Caco-2 (cell line): ENCODE measurements at regions of chr14 and their contacts with region 1.

Region 1: GRCh38 chr14:20343092-20343861 is at the start of gene PARP2:
- DNase-seq: peak; percentile 99 to 100
- H3K4me3 ChIP-seq: peak within 1 kb of the TSS; percentile 78
- H3K4me3 Mint-ChIP-seq: peak within 1 kb of the TSS; percentile 92
- H3K27ac Mint-ChIP-seq: peak within 1 kb of the TSS; percentile 98
- H3K4me1 ChIP-seq: no peaks in the 10 kb centered on the region
- H3K4me1 Mint-ChIP-seq: peaks cover 11% of the 10 kb centered on the region
- H3K27me3 ChIP-seq: no peaks in the 10 kb centered on the region
- H3K27me3 Mint-ChIP-seq: no peaks in the 10 kb centered on the region
- CTCF ChIP-seq: no peak
- total RNA-seq, gene PARP2: 41.1 and 49.4 TPM in 2 replicates

Region 2: DNA sequence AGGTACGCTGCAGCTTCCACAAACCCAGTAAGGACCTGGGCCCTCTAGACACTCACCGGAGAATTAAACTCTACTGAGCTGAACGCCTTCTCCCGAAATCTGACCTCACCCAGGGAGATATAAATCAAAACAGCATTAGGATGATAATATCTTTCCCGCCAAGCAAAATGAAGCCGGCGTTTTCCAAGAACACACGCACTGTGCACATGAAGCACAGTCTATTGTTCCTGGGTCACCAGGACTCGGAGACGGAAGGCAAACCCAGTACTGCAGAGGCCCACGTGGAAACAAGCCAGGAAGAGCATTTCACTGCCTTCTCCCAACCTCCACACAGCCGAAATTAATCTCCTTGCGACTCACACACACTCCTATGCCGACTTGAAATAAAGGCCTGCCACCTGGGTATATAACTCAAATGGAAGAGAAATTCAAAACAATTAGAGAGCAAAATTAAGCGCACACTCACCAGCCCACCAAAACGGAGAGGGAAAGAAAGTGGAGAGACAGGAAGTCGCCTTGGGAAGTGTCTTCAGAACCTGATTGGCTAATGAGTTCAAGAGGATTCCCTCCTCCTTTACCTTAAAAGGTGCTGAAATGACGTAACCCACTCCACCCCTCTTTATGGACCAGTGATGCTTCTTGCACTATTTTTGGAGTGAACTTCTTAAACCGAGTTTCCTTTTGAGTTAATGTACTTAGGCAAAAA is 10.3 kb before region 1 on chr14 and contains the start of gene CCNB1IP1:
- CTCF ChIA-PET with region 1: interaction called, 7 read pairs
- POLR2A ChIA-PET with region 1: interaction called, 52 read pairs
- intact Hi-C with region 1: loop called (anchors 1 kb)
- DNase-seq: peak; percentile 69 to 76
- H3K4me3 ChIP-seq: peak within 1 kb of the TSS; percentile 60
- H3K4me3 Mint-ChIP-seq: peak within 1 kb of the TSS; percentile 96
- H3K27ac Mint-ChIP-seq: peak within 1 kb of the TSS; percentile 96
- H3K4me1 ChIP-seq: peaks cover 10% of the 10 kb centered on the region; the same call in 1 of the 2 replicates
- H3K4me1 Mint-ChIP-seq: peaks cover 22% of the 10 kb centered on the region
- H3K27me3 ChIP-seq: no peaks in the 10 kb centered on the region
- H3K27me3 Mint-ChIP-seq: no peaks in the 10 kb centered on the region
- CTCF ChIP-seq: no peak
- total RNA-seq, gene CCNB1IP1: 111 and 118 TPM in 2 replicates

Region 3: GRCh38 chr14:20454516-20455354 is 111.5 kb after region 1 on chr14 and contains the starts of genes APEX1 and OSGEP:
- CTCF ChIA-PET with region 1: no interaction called
- POLR2A ChIA-PET with region 1: interaction called, 26 read pairs
- intact Hi-C with region 1: loop called (anchors 1 kb)
- DNase-seq: peak; percentile 97 to 99
- H3K4me3 ChIP-seq: peak within 1 kb of the TSS; percentile 63
- H3K4me3 Mint-ChIP-seq: no peak within 1 kb of the TSS
- H3K27ac Mint-ChIP-seq: no peak within 1 kb of the TSS
- H3K4me1 ChIP-seq: no peaks in the 10 kb centered on the region
- H3K4me1 Mint-ChIP-seq: peaks cover 1% of the 10 kb centered on the region
- H3K27me3 ChIP-seq: no peaks in the 10 kb centered on the region
- H3K27me3 Mint-ChIP-seq: no peaks in the 10 kb centered on the region
- CTCF ChIP-seq: no peak
- total RNA-seq, gene APEX1: 176 and 185 TPM in 2 replicates
- total RNA-seq, gene OSGEP: 63.1 and 64.3 TPM in 2 replicates

Region 4: GRCh38 chr14:20469242-20469889 is 126.1 kb after region 1 on chr14 and contains the start of gene PNP:
- CTCF ChIA-PET with region 1: interaction called, 3 read pairs
- POLR2A ChIA-PET with region 1: interaction called, 16 read pairs
- intact Hi-C with region 1: no loop called
- DNase-seq: peak; percentile 94
- H3K4me3 ChIP-seq: peak within 1 kb of the TSS; percentile 90
- H3K4me3 Mint-ChIP-seq: peak within 1 kb of the TSS; percentile 83
- H3K27ac Mint-ChIP-seq: peak within 1 kb of the TSS; percentile 90
- H3K4me1 ChIP-seq: peaks cover 9% of the 10 kb centered on the region
- H3K4me1 Mint-ChIP-seq: peaks cover 21% of the 10 kb centered on the region
- H3K27me3 ChIP-seq: no peaks in the 10 kb centered on the region
- H3K27me3 Mint-ChIP-seq: no peaks in the 10 kb centered on the region
- CTCF ChIP-seq: no peak
- total RNA-seq, gene PNP: 59.1 and 67.2 TPM in 2 replicates

Region 5: GRCh38 chr14:20682435-20683124 is 339.3 kb after region 1 on chr14:
- CTCF ChIA-PET with region 1: interaction called, 3 read pairs
- POLR2A ChIA-PET with region 1: interaction called, 5 read pairs
- intact Hi-C with region 1: loop called (anchors 1 kb)
- DNase-seq: peak; percentile 82 to 88
- H3K4me3 ChIP-seq: peak overlapping the region; percentile 61
- H3K4me3 Mint-ChIP-seq: no peak overlapping the region
- H3K27ac Mint-ChIP-seq: no peak overlapping the region
- H3K4me1 ChIP-seq: peaks cover 16% of the 10 kb centered on the region
- H3K4me1 Mint-ChIP-seq: peaks cover 15% of the 10 kb centered on the region
- H3K27me3 ChIP-seq: no peaks in the 10 kb centered on the region
- H3K27me3 Mint-ChIP-seq: no peaks in the 10 kb centered on the region
- CTCF ChIP-seq: no peak